T-cell (primary cell): ENCODE measurements at regions of chr11 and their contacts with region 1.

Region 1: GRCh38 chr11:102546923-102547471 is 16.4 kb upstream of the MMP7 start:
- DNase-seq: peak in 10 of 35 experiments; percentile 3 to 40 (median 10)
- ATAC-seq: no peak
- H3K4me3 ChIP-seq: no peak overlapping the region
- H3K4me3 Mint-ChIP-seq: no peak overlapping the region
- H3K27ac ChIP-seq: no peak overlapping the region
- H3K27ac Mint-ChIP-seq: no peak overlapping the region
- H3K4me1 ChIP-seq: no peaks in the 10 kb centered on the region
- H3K4me1 Mint-ChIP-seq: peaks cover 0 to 15% (median 0%) of the 10 kb centered on the region in 3 donors
- H3K27me3 ChIP-seq: no peaks in the 10 kb centered on the region
- H3K27me3 Mint-ChIP-seq: no peaks in the 10 kb centered on the region

Region 2: DNA sequence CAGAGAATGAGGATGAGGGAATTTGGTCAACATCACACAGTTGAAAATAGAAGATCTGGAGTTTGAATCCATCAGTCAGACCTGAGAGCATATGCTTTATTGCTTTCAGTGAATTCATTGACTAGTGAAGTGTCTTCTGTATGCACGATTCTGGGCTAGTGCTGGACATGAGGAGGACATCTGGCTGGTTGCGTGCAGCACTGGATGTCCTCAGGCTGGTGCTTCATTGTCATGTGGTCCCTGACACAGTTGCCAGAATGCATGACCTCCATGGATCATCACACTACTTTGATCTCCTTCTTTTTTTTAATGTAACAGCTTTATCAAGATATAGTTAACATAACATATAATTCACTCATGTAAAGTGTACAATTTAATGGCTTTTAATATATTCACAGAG is 28.0 kb after region 1 on chr11:
- CTCF ChIA-PET with region 1: no interaction called
- POLR2A ChIA-PET with region 1: interaction called, 3 to 13 read pairs
- DNase-seq: no peak
- ATAC-seq: no peak
- H3K4me3 ChIP-seq: no peak overlapping the region
- H3K4me3 Mint-ChIP-seq: no peak overlapping the region
- H3K27ac ChIP-seq: no peak overlapping the region
- H3K27ac Mint-ChIP-seq: no peak overlapping the region
- H3K4me1 ChIP-seq: peaks cover 3 to 18% of the 10 kb centered on the region in 2 experiments
- H3K4me1 Mint-ChIP-seq: peaks cover 22 to 25% (median 24%) of the 10 kb centered on the region in 3 donors
- H3K27me3 ChIP-seq: no peaks in the 10 kb centered on the region
- H3K27me3 Mint-ChIP-seq: no peaks in the 10 kb centered on the region